GM10248 (cell line): ENCODE measurements at regions of chr11 and their contacts with region 1.

Region 1: GRCh38 chr11:4134844-4135243 is 40.2 kb downstream of the RRM1 start:
- DNase-seq: no peak
- CTCF ChIP-seq: no peak

Region 2: DNA sequence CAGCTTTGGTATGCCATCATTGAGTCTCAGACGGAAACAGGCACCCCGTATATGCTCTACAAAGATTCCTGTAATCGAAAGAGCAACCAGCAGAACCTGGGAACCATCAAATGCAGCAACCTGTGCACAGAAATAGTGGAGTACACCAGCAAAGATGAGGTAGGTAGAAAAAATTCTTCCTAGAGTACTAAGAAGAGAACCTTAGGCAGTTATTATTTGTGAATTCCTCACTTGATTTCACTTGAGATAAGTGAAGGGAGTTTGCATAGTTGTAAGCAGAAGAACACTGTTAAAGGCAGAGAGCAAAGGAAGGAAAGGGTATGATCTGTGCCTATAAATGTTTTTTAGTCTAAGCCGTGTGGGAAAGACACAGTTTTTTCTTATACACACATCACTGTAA is 11.6 kb before region 1 on chr11:
- CTCF ChIA-PET with region 1: interaction called, 17 read pairs
- POLR2A ChIA-PET with region 1: no interaction called
- DNase-seq: no peak
- CTCF ChIP-seq: no peak

Region 3: GRCh38 chr11:4167758-4168157 is 32.9 kb after region 1 on chr11:
- CTCF ChIA-PET with region 1: no interaction called
- POLR2A ChIA-PET with region 1: no interaction called
- DNase-seq: no peak
- CTCF ChIP-seq: no peak